ENCODE measurements at regions of chrX and their contacts with region 1.

Region 1: GRCh38 chrX:63686878-63687714 is 97.9 kb downstream of the ARHGEF9 start:
- DNase-seq: peak; percentile 2
- ATAC-seq: no peak
- H3K4me3 Mint-ChIP-seq: no peak overlapping the region
- H3K27ac Mint-ChIP-seq: no peak overlapping the region
- H3K4me1 Mint-ChIP-seq: no peaks in the 10 kb centered on the region
- H3K27me3 Mint-ChIP-seq: no peaks in the 10 kb centered on the region
- CTCF ChIP-seq: peak; percentile 63

Region 2: DNA sequence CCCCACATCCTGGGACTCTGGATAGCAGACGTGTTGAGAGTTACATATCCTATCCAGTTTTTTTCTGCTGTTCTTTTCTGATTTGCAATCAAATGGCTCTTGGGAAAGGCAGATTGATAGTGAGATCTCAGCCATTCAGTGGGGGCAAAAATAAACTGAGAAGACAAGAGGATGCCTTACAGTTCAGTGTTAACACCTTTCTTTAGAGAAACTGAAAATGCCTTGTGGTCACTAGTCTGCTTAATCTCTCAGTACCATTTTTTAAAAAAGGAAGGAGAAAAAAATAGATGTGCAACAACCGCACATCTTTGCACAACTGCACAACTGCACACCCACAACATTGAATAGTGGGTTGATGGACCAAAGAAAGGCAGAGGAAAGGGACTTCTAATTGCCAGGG is 11.4 kb before region 1 on chrX:
- CTCF ChIA-PET with region 1: interaction called, 13 read pairs
- POLR2A ChIA-PET with region 1: no interaction called
- intact Hi-C with region 1: no loop called
- DNase-seq: no peak
- ATAC-seq: no peak
- H3K4me3 Mint-ChIP-seq: no peak overlapping the region
- H3K27ac Mint-ChIP-seq: no peak overlapping the region
- H3K4me1 Mint-ChIP-seq: no peaks in the 10 kb centered on the region
- H3K27me3 Mint-ChIP-seq: no peaks in the 10 kb centered on the region
- CTCF ChIP-seq: no peak

Region 3: DNA sequence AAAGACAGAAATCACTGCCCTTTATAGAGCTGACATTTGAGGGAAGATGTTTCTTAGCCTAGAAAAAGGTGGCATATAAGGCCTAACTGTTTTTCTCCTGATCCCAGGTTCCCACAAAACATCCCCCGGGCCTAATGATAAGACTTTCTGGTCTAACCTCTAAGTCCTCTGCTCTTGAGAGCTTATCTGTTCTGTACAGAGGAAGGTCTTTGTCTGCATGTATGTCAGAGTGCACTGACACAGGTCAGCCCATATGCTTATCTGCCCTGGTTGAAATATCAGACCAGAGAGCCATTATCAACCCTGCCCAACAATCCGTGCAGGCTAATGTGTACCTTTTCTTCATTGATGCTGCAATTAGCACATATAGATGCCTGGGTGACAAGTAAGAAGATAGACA is 21.7 kb after region 1 on chrX:
- CTCF ChIA-PET with region 1: interaction called, 11 read pairs
- POLR2A ChIA-PET with region 1: no interaction called
- intact Hi-C with region 1: no loop called
- DNase-seq: no peak
- ATAC-seq: no peak
- H3K4me3 Mint-ChIP-seq: no peak overlapping the region
- H3K27ac Mint-ChIP-seq: no peak overlapping the region
- H3K4me1 Mint-ChIP-seq: peaks cover 10% of the 10 kb centered on the region
- H3K27me3 Mint-ChIP-seq: no peaks in the 10 kb centered on the region
- CTCF ChIP-seq: no peak

Region 4: DNA sequence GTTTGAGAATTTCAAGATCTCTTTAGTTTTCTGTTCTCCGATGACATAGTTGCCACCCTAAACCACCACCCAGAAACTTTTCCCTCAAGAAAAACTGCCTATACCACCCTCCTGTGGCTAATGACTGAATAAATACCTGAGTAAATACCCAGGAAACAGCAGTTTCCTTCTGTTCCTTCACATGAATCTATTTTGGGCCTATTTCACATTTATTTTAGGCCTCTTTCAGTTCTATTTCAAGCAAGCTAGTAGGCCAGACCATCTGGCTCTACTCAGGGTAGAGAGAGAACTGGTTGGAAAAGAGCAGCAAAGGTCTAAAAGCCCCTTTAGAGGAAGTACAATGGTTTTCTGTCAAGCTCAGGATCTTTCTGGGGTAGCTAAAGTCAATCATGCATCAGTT is 74.5 kb after region 1 on chrX:
- CTCF ChIA-PET with region 1: interaction called, 10 read pairs
- POLR2A ChIA-PET with region 1: no interaction called
- intact Hi-C with region 1: no loop called
- DNase-seq: no peak
- ATAC-seq: peak; percentile 58
- H3K4me3 Mint-ChIP-seq: no peak overlapping the region
- H3K27ac Mint-ChIP-seq: peak overlapping the region; percentile 30
- H3K4me1 Mint-ChIP-seq: peaks cover 12% of the 10 kb centered on the region
- H3K27me3 Mint-ChIP-seq: no peaks in the 10 kb centered on the region
- CTCF ChIP-seq: peak; percentile 32